ENCODE measurements at regions of chr17 and their contacts with region 1.

Region 1: GRCh38 chr17:79839363-79840268 is at the start of gene CBX4:
- DNase-seq: peak; percentile 94 to 98
- H3K4me3 ChIP-seq: peak within 1 kb of the TSS; percentile 82 to 87
- H3K27ac ChIP-seq: peak within 1 kb of the TSS; percentile 88 to 92
- H3K4me1 ChIP-seq: peaks cover 8 to 79% (median 70%) of the 10 kb centered on the region in 4 donors
- H3K27me3 ChIP-seq: peaks cover 8 to 76% of the 10 kb centered on the region in 2 donors
- CTCF ChIP-seq: peak; percentile 44 to 49

Region 2: DNA sequence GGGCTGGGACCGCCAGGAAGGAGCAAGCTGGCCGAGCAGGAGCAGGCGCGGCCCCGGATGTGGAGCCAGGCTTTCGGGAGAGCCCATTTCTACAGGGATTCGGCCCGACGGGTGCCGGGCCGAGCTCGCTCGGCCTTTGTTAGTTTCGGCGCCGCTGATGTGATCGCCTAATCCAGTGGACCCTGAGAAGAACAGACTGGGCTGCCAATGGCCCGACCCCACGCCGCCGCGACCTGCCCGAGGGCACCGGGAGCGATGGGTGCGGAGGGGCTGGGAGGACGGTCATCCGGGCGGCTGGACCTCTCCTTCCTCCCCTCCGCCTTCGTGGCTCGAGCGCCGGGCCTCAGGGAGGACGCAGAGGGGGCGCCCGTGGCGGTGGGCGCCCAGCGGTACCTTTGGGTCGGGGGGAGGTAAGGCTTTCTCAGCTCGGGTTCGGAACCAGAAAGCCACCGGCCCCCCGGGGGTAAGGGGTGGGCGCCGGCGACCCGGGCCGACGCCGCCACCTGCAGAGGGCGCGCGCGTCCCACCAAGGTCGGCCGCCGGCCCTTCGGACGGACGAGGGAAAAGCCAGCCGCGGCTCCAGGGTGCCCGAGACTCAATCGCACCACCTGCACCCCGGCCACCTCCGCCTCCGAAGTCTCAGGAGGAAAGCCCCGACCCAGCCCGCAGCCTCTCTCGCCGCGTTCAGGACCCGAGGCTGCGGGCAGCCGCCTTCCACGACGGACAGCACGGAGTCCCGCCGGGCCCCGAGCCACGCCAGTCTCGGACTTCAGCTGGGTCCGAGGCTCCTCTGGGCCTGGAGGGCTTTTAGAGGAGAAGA is 49.9 kb before region 1 on chr17:
- intact Hi-C with region 1: loop called (anchors 2 kb)
- DNase-seq: no peak
- H3K4me3 ChIP-seq: no peak overlapping the region
- H3K27ac ChIP-seq: no peak overlapping the region
- H3K4me1 ChIP-seq: peaks cover 0 to 49% (median 34%) of the 10 kb centered on the region in 4 donors
- H3K27me3 ChIP-seq: peaks cover 20 to 97% of the 10 kb centered on the region in 2 donors
- CTCF ChIP-seq: peak; percentile 65 to 76

Region 3: GRCh38 chr17:79915850-79916430 is 76.3 kb after region 1 on chr17:
- intact Hi-C with region 1: loop called (anchors 10 kb)
- DNase-seq: no peak
- H3K4me3 ChIP-seq: no peak overlapping the region
- H3K27ac ChIP-seq: no peak overlapping the region
- H3K4me1 ChIP-seq: peaks cover 0 to 23% (median 17%) of the 10 kb centered on the region in 4 donors
- H3K27me3 ChIP-seq: peaks cover 0 to 82% of the 10 kb centered on the region in 2 donors
- CTCF ChIP-seq: peak in 1 of 2 experiments; percentile 14